Calu3 (cell line): ENCODE measurements at regions of chr5 and their contacts with region 1.

Region 1: GRCh38 chr5:128498844-128499455 is 39.1 kb downstream of the FBN2 start:
- DNase-seq: peak; percentile 50
- H3K4me3 Mint-ChIP-seq: no peak overlapping the region
- H3K27ac Mint-ChIP-seq: no peak overlapping the region
- H3K4me1 Mint-ChIP-seq: no peaks in the 10 kb centered on the region
- H3K27me3 Mint-ChIP-seq: no peaks in the 10 kb centered on the region
- CTCF ChIP-seq: peak; percentile 46

Region 2: DNA sequence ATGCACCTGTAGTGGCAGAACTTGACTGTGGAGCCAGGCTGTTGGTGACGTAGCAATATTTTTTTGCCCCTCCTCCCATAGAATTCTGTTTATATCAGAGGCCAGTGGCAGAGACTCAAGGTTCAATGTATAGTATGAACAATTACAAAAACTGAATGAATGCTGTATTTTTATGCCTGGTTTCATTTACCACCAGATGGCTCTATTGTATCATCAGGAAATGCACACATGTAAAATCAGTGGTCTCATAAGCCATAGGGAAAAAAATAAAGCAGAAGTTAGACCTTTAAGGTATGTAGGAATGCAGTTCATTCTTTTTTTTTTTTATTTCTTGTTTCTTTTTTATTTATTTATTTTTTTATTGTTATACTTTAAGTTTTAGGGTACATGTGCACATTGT is 752.2 kb before region 1 on chr5:
- CTCF ChIA-PET with region 1: no interaction called
- intact Hi-C with region 1: loop called (anchors 2 kb)
- DNase-seq: no peak
- H3K4me3 Mint-ChIP-seq: no peak overlapping the region
- H3K27ac Mint-ChIP-seq: no peak overlapping the region
- H3K4me1 Mint-ChIP-seq: no peaks in the 10 kb centered on the region
- H3K27me3 Mint-ChIP-seq: no peaks in the 10 kb centered on the region
- CTCF ChIP-seq: peak; percentile 61

Region 3: GRCh38 chr5:128213340-128213739 is 285.6 kb before region 1 on chr5:
- CTCF ChIA-PET with region 1: interaction called, 9 read pairs
- intact Hi-C with region 1: loop called (anchors 1 kb)
- DNase-seq: peak; percentile 75
- H3K4me3 Mint-ChIP-seq: no peak overlapping the region
- H3K27ac Mint-ChIP-seq: peak overlapping the region; percentile 57
- H3K4me1 Mint-ChIP-seq: peaks cover 9% of the 10 kb centered on the region
- H3K27me3 Mint-ChIP-seq: no peaks in the 10 kb centered on the region
- CTCF ChIP-seq: peak; percentile 78

Region 4: GRCh38 chr5:128674825-128675446 is 176.0 kb after region 1 on chr5:
- CTCF ChIA-PET with region 1: no interaction called
- intact Hi-C with region 1: loop called (anchors 5 kb)
- DNase-seq: peak; percentile 76
- H3K4me3 Mint-ChIP-seq: no peak overlapping the region
- H3K27ac Mint-ChIP-seq: no peak overlapping the region
- H3K4me1 Mint-ChIP-seq: peaks cover 15% of the 10 kb centered on the region
- H3K27me3 Mint-ChIP-seq: no peaks in the 10 kb centered on the region
- CTCF ChIP-seq: peak; percentile 55

Region 5: DNA sequence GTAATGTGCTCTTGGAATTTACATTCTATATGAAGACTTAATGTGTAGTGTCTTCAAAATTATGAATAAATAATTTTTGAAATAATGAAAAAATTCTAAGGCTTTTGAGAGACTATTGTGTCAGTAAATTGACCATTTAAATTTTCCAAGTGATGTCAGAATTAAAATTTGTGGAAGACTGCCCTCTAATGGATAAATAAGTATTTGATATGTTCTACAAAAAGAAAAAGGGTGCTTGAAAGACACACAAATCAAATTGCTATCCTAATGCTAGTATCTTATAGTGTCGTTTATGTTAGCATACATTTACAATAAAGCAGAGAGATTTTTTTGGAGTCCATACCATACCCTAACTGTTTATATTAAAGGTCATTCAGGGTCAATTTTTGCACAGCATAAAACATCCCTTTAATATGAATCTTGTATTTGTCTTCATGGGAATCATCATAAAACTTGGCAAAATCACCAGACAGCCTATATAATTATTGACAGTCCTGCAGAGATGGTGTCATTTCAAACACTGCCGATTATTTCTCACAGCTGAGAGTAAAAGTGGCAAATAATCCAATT is 345.5 kb after region 1 on chr5:
- CTCF ChIA-PET with region 1: no interaction called
- intact Hi-C with region 1: loop called (anchors 2 kb)
- DNase-seq: no peak
- H3K4me3 Mint-ChIP-seq: no peak overlapping the region
- H3K27ac Mint-ChIP-seq: no peak overlapping the region
- H3K4me1 Mint-ChIP-seq: no peaks in the 10 kb centered on the region
- H3K27me3 Mint-ChIP-seq: no peaks in the 10 kb centered on the region
- CTCF ChIP-seq: no peak